ENCODE measurements at regions of chr5 and their contacts with region 1.

Region 1: DNA sequence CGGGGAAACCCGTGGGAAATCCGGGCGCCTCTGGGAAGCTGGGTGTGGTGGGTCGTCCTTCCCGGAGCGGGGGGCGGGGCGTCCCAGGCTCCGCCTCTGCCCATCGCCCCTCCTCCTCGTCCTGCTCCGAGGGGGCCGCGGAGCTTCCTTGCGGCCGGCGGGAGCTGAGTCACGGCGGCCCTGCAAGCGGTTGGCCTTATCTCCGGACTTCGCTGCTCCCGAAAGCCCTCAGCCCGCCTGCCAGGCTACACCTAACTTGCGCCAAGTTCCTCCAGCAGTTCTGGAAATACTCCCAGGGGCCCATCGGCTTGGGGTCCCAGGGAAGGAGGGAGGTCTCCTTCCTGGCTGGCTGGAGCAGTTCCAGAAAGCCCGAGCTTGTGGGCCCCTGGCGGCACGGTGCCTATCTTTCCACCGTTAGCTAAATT is 54.1 kb upstream of the CDKN2AIPNL start:
- DNase-seq: peak; percentile 97
- H3K4me3 Mint-ChIP-seq: peak overlapping the region; percentile 72
- H3K27ac Mint-ChIP-seq: peak overlapping the region; percentile 44
- H3K4me1 Mint-ChIP-seq: peaks cover 42% of the 10 kb centered on the region
- H3K27me3 Mint-ChIP-seq: no peaks in the 10 kb centered on the region
- CTCF ChIP-seq: no peak

Region 2: DNA sequence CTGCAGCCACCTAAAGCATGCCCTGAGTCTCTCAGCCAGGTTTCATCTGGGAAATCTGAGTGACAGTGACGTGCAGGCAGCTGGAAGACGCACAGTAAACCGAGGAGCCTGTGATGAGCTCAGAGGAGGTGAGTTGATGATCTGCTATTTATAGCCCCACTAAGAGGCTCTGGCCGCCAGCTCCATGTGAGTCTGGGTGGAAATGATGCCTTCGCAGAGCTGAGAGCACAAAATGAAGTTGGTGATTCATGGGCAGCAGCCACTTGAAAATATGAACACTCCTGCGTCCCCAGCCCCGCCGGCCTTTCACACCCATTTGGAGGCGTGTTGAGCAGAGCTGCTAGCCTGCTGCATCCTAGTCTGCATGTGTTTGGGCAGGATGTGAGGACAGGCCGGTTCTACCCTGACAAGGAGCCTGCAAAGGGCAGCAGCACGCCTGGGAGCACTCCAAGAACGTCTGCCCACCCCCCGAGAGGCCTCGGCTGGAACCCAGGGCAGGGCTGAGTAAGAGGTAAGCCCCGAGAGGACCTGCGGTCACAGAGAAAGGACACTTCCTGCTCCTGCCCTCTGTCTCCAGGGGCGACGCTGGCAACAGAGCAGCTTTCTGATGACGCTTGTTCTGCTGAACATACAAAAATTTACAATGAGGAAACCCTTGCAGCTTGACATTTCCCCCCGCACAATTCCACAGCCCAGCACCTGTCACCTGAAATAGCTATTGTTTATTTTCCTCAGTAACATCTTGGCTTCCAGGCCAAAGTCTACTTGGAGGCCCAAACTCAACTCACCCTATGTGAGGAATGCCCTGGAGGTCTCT is 29.1 kb before region 1 on chr5:
- CTCF ChIA-PET with region 1: interaction called, 42 read pairs
- POLR2A ChIA-PET with region 1: interaction called, 321 read pairs
- intact Hi-C with region 1: loop called (anchors 1 kb)
- DNase-seq: peak; percentile 96
- H3K4me3 Mint-ChIP-seq: peak overlapping the region; percentile 63
- H3K27ac Mint-ChIP-seq: peak overlapping the region; percentile 98
- H3K4me1 Mint-ChIP-seq: peaks cover 72% of the 10 kb centered on the region
- H3K27me3 Mint-ChIP-seq: no peaks in the 10 kb centered on the region
- CTCF ChIP-seq: no peak

Region 3: DNA sequence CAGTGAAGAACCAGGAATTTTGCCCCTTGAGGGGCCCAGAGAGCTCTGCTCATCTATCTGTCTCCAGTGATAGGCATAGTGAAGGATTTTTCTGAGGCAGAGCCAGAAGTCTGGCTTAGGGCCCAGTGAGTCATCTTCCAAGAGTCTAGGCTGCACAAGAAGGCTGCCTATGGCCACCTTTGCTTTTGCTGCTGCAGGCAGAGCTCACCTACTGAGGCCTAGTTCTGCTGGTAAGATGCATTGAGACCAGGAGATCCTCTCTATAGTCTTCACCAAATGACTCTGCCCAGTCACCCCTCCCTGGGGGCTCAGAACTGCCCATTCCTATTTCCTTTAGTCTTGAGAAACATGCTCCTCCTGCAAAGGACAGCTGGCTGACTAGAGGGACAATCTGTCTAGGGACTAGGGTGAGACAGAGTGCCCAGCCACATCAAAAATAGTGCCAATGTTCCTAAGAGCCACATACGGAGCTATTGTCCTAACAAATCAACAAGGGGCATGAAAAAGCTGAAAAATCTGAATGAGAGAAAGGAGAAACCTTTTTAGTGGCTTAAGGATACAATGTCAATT is 13.8 kb before region 1 on chr5:
- CTCF ChIA-PET with region 1: interaction called, 8 read pairs
- POLR2A ChIA-PET with region 1: interaction called, 39 read pairs
- intact Hi-C with region 1: no loop called
- DNase-seq: peak; percentile 94
- H3K4me3 Mint-ChIP-seq: no peak overlapping the region
- H3K27ac Mint-ChIP-seq: no peak overlapping the region
- H3K4me1 Mint-ChIP-seq: peaks cover 24% of the 10 kb centered on the region
- H3K27me3 Mint-ChIP-seq: no peaks in the 10 kb centered on the region
- CTCF ChIP-seq: no peak

Region 4: GRCh38 chr5:134493461-134494055 is 27.7 kb after region 1 on chr5:
- CTCF ChIA-PET with region 1: interaction called, 4 read pairs
- POLR2A ChIA-PET with region 1: interaction called, 39 read pairs
- intact Hi-C with region 1: no loop called
- DNase-seq: no peak
- H3K4me3 Mint-ChIP-seq: no peak overlapping the region
- H3K27ac Mint-ChIP-seq: no peak overlapping the region
- H3K4me1 Mint-ChIP-seq: no peaks in the 10 kb centered on the region
- H3K27me3 Mint-ChIP-seq: no peaks in the 10 kb centered on the region
- CTCF ChIP-seq: no peak

Region 5: DNA sequence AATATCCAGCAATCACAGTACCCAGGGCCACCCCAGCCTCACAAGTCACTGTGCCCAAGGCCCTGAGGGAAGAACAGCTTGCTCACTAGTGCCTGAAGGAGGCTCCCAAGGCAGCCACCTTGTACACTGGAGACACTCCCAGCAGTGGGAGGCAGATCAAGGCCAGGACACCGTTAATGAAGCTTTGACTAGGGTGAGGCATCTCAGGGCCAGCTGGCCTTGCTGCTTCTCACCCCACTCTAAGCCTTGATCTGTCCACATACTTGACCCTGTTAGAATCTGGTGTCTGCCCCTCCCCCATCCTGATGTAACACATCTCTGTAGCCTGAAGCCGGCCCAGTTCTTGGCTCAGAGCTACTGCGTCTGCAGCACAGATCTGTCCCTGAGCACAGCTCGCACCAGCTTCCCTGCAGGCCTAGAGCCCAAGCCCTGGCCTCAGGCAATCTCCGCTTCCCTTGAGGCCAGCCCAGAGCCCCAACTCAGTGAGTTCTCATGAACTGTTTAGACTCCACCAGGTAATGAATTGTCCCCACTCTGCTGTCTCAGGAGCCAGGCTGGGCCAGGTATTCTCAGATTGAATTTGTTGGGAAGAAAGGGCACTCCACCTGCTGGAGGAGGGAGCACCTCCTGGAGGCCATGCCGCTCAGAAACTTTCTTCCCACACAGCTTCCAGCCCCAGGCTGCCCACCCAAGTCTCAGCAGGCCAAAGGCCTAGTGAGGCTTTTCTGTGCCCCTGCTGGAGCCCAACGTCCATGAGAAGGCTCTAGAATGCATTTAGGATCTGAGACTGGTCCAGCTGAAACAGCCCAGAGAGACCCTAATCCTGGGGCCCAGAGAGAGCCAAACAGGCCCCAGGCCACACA is 46.2 kb after region 1 on chr5:
- CTCF ChIA-PET with region 1: interaction called, 44 read pairs
- POLR2A ChIA-PET with region 1: interaction called, 298 read pairs
- intact Hi-C with region 1: loop called (anchors 1 kb)
- DNase-seq: peak; percentile 95
- H3K4me3 Mint-ChIP-seq: peak overlapping the region; percentile 48
- H3K27ac Mint-ChIP-seq: peak overlapping the region; percentile 82
- H3K4me1 Mint-ChIP-seq: peaks cover 54% of the 10 kb centered on the region
- H3K27me3 Mint-ChIP-seq: no peaks in the 10 kb centered on the region
- CTCF ChIP-seq: peak; percentile 61